ENCODE measurements at regions of chr20 and their contacts with region 1.

Region 1: GRCh38 chr20:1776681-1777475 is 118.3 kb upstream of the SIRPA start:
- DNase-seq: peak; percentile 87 to 94 (median 91)
- ATAC-seq: peak; percentile 94 to 99 (median 98)
- H3K4me3 ChIP-seq: peak overlapping the region; percentile 58 to 95 (median 76)
- H3K27ac ChIP-seq: peak overlapping the region in 9 of 12 donors; percentile 30 to 81 (median 59)
- H3K4me1 ChIP-seq: peaks cover 0 to 17% (median 11%) of the 10 kb centered on the region in 12 donors
- H3K27me3 ChIP-seq: no peaks in the 10 kb centered on the region
- CTCF ChIP-seq: peak; percentile 72 to 89 (median 82)
- POLR2A ChIP-seq: peak in 1 of 2 donors; percentile 13

Region 2: DNA sequence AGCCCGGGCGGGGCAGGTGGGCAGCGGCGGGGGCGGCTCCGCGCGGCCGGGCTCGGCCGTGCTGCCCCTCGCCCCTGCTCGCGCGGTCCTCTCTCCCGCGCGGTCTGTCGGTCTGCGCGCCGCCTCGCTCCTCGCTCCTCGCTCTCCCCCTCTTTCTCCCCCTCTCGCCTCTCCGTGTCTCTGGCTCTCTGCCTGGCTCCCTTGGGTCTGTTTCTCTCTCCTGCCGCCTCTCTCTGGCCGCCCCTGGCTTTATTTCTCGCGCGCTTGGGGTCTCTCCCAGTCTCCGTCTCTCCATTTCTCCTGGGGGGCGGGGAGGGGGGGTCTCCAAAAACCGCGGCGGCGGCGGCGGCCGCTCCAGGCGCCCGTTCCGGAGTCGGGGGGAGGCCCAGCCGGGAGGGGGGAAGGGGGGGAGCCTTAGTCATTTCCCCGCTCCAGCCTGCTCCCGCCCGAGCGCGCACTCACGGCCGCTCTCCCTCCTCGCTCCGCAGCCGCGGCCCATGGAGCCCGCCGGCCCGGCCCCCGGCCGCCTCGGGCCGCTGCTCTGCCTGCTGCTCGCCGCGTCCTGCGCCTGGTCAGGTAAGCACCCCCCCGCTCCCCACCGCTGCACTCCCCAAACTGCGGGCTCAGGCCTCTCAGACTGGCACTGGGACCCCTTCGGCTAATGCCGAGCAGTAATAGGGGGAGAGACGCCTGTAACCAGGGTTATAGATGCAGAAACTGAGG is 118.2 kb after region 1 on chr20 and contains the start of gene SIRPA:
- intact Hi-C with region 1: loop called in 1 of 10 experiments (anchors 1 kb)
- DNase-seq: peak; percentile 68 to 81 (median 74)
- ATAC-seq: peak; percentile 35 to 74 (median 64)
- H3K4me3 ChIP-seq: peak within 1 kb of the TSS; percentile 53 to 96 (median 71)
- H3K27ac ChIP-seq: peak within 1 kb of the TSS; percentile 84 to 98 (median 92)
- H3K4me1 ChIP-seq: peaks cover 0 to 57% (median 32%) of the 10 kb centered on the region in 12 donors
- H3K27me3 ChIP-seq: no peaks in the 10 kb centered on the region
- CTCF ChIP-seq: no peak
- POLR2A ChIP-seq: peak in 1 of 2 donors; percentile 34
- total RNA-seq, gene SIRPA: 13.6 to 73.5 (median 28.5) TPM

Region 3: GRCh38 chr20:2093159-2093781 is 316.4 kb after region 1 on chr20:
- intact Hi-C with region 1: loop called in 2 of 10 experiments (anchors 10 kb)
- DNase-seq: no peak
- ATAC-seq: no peak
- H3K4me3 ChIP-seq: no peak overlapping the region
- H3K27ac ChIP-seq: no peak overlapping the region
- H3K4me1 ChIP-seq: no peaks in the 10 kb centered on the region
- H3K27me3 ChIP-seq: peaks cover 0 to 54% (median 14%) of the 10 kb centered on the region in 9 donors
- CTCF ChIP-seq: peak in 9 of 12 donors; percentile 11 to 47 (median 28)
- POLR2A ChIP-seq: no peak

Region 4: DNA sequence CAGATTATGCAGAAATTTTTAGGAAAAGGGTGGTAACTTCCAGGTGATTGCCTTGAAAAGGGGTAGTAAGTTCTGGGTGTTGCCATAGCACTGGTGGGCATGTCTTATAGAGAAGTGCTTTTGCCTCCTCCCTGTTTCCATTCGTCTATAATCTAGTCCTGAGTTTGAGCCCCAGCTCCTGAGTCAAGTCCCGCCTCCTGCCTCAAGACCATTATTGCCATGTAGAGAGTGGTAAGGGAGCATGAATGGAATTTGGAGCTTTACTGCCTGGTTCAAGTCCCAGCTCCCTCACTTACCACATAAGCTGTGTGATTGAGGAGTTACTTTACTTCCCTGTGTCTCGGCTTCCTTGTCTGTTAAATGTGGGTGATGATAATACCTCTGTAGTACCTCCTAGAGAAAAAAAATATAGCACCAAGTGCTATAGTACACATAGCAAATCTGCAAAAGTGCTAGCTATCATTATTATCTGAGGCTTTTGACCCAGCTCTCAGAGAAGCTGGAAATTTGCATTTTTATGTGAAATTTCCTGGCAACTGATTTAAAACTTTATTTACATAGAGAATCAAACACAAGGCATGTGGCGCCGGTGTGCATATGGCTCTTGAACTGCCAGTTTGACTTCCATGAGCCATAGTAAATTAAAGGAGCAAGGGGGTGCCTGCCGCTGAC is 639.8 kb after region 1 on chr20:
- intact Hi-C with region 1: no loop called
- DNase-seq: no peak
- ATAC-seq: no peak
- H3K4me3 ChIP-seq: no peak overlapping the region
- H3K27ac ChIP-seq: no peak overlapping the region
- H3K4me1 ChIP-seq: no peaks in the 10 kb centered on the region
- H3K27me3 ChIP-seq: peaks cover 0 to 19% (median 0%) of the 10 kb centered on the region in 9 donors
- CTCF ChIP-seq: no peak
- POLR2A ChIP-seq: no peak